Naive thymus-derived CD8-positive, alpha-beta T cell (primary cell): ENCODE measurements at regions of chr18 and their contacts with region 1.

Region 1: DNA sequence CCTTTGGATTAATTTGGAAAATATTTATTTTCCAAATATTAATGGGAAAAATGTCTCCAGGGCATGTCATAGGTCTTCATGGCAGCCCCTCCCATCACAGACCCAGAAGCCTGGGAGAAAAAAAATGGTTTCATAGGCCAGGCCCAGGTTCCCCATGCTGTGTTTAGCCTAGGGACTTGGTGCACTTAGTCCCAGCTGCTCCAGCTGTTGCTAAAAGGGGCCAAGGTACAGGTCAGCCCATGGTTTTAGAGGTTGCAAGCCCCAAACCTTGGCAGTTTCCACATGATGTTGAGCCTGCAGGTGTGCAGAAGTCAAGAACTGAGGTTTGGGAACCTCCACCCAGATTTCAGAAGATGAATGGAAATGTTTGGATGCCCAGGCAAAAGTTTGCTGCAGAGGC is 309.6 kb downstream of the SOCS6 start:
- DNase-seq: no peak
- ATAC-seq: peak in 1 of 2 donors; percentile 7
- H3K4me3 Mint-ChIP-seq: peak overlapping the region in 1 of 10 donors; percentile 67
- H3K27ac Mint-ChIP-seq: peak overlapping the region in 6 of 10 donors; percentile 78 to 92 (median 84)
- H3K4me1 Mint-ChIP-seq: peaks cover 6 to 29% (median 12%) of the 10 kb centered on the region in 4 donors
- H3K27me3 Mint-ChIP-seq: no peaks in the 10 kb centered on the region

Region 2: GRCh38 chr18:70553245-70553935 is 45.0 kb before region 1 on chr18:
- POLR2A ChIA-PET with region 1: no interaction called
- DNase-seq: peak in 8 of 10 donors; percentile 3 to 68 (median 64)
- ATAC-seq: peak; percentile 85 to 87
- H3K4me3 Mint-ChIP-seq: peak overlapping the region in 9 of 10 donors; percentile 2 to 57 (median 38)
- H3K27ac Mint-ChIP-seq: peak overlapping the region; percentile 33 to 96 (median 87)
- H3K4me1 Mint-ChIP-seq: peaks cover 4 to 21% (median 12%) of the 10 kb centered on the region in 4 donors
- H3K27me3 Mint-ChIP-seq: no peaks in the 10 kb centered on the region

Region 3: GRCh38 chr18:70659036-70659925 is 60.9 kb after region 1 on chr18:
- POLR2A ChIA-PET with region 1: interaction called, 15 read pairs
- DNase-seq: peak; percentile 29 to 90 (median 78)
- ATAC-seq: peak; percentile 88 to 96
- H3K4me3 Mint-ChIP-seq: peak overlapping the region; percentile 48 to 76 (median 68)
- H3K27ac Mint-ChIP-seq: peak overlapping the region; percentile 94 to 100 (median 96)
- H3K4me1 Mint-ChIP-seq: peaks cover 25 to 65% (median 59%) of the 10 kb centered on the region in 4 donors
- H3K27me3 Mint-ChIP-seq: no peaks in the 10 kb centered on the region

Region 4: GRCh38 chr18:70920840-70921374 is 322.5 kb after region 1 on chr18:
- POLR2A ChIA-PET with region 1: no interaction called
- DNase-seq: no peak
- ATAC-seq: no peak
- H3K4me3 Mint-ChIP-seq: no peak overlapping the region
- H3K27ac Mint-ChIP-seq: no peak overlapping the region
- H3K4me1 Mint-ChIP-seq: peaks cover 0 to 2% (median 0%) of the 10 kb centered on the region in 4 donors
- H3K27me3 Mint-ChIP-seq: no peaks in the 10 kb centered on the region

Region 5: GRCh38 chr18:71075147-71075546 is 476.7 kb after region 1 on chr18:
- POLR2A ChIA-PET with region 1: no interaction called
- DNase-seq: no peak
- ATAC-seq: no peak
- H3K4me3 Mint-ChIP-seq: no peak overlapping the region
- H3K27ac Mint-ChIP-seq: no peak overlapping the region
- H3K4me1 Mint-ChIP-seq: peaks cover 0 to 4% (median 0%) of the 10 kb centered on the region in 4 donors
- H3K27me3 Mint-ChIP-seq: peaks cover 0 to 3% (median 0%) of the 10 kb centered on the region in 5 donors